ENCODE measurements at regions of chr13 and their contacts with region 1.

Region 1: GRCh38 chr13:48155848-48156247 is 60.9 kb upstream of the MED4 start:
- DNase-seq: peak; percentile 94
- H3K4me3 ChIP-seq: no peak overlapping the region
- H3K27ac ChIP-seq: peak overlapping the region; percentile 90
- H3K4me1 ChIP-seq: peaks cover 66% of the 10 kb centered on the region
- H3K27me3 ChIP-seq: no peaks in the 10 kb centered on the region
- CTCF ChIP-seq: no peak

Region 2: GRCh38 chr13:48210178-48210577 is 54.3 kb after region 1 on chr13:
- CTCF ChIA-PET with region 1: no interaction called
- dilution Hi-C with region 1: no loop called
- in situ Hi-C with region 1: no loop called
- intact Hi-C with region 1: loop called (anchors 5 kb)
- DNase-seq: peak; percentile 95
- H3K4me3 ChIP-seq: no peak overlapping the region
- H3K27ac ChIP-seq: peak overlapping the region; percentile 74
- H3K4me1 ChIP-seq: peaks cover 13% of the 10 kb centered on the region
- H3K27me3 ChIP-seq: no peaks in the 10 kb centered on the region
- CTCF ChIP-seq: no peak

Region 3: DNA sequence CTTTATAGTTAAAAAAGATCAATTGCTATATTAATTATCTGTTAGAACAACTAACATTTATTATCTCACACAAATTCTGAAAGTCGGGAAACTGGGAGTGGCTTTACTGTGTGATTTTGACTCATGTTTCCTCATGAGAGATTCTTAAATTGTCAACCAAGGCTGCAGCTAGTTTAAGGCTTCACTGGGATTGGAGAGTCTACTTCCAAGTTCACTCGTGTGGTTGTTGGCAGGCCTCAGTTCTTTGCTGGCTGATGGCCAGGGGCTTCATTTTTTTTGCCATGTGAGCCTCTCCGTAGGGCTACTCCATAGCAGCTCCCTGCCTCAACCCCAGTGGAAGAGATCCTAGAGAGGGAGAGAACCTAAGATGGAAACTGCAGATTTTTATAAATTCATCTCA is 281.5 kb after region 1 on chr13:
- CTCF ChIA-PET with region 1: interaction called, 11 read pairs
- dilution Hi-C with region 1: no loop called
- in situ Hi-C with region 1: no loop called
- intact Hi-C with region 1: no loop called
- DNase-seq: no peak
- H3K4me3 ChIP-seq: no peak overlapping the region
- H3K27ac ChIP-seq: no peak overlapping the region
- H3K4me1 ChIP-seq: peaks cover 10% of the 10 kb centered on the region
- H3K27me3 ChIP-seq: no peaks in the 10 kb centered on the region
- CTCF ChIP-seq: no peak

Measured in mammary epithelial cell (primary cell).